ENCODE measurements at regions of chr2 and their contacts with region 1.

Region 1: GRCh38 chr2:113198790-113199612 is 25.2 kb downstream of the PSD4 start:
- DNase-seq: peak; percentile 78
- ATAC-seq: peak; percentile 78
- H3K4me3 Mint-ChIP-seq: no peak overlapping the region
- H3K27ac Mint-ChIP-seq: no peak overlapping the region
- H3K4me1 Mint-ChIP-seq: peaks cover 47% of the 10 kb centered on the region
- H3K27me3 Mint-ChIP-seq: no peaks in the 10 kb centered on the region

Region 2: GRCh38 chr2:113173542-113174395 is 25.2 kb before region 1 on chr2 and contains the start of gene PSD4:
- CTCF ChIA-PET with region 1: interaction called, 30 read pairs
- POLR2A ChIA-PET with region 1: interaction called, 17 read pairs
- DNase-seq: peak; percentile 96
- ATAC-seq: peak; percentile 75
- H3K4me3 Mint-ChIP-seq: peak within 1 kb of the TSS; percentile 83
- H3K27ac Mint-ChIP-seq: peak within 1 kb of the TSS; percentile 91
- H3K4me1 Mint-ChIP-seq: peaks cover 70% of the 10 kb centered on the region
- H3K27me3 Mint-ChIP-seq: peaks cover 2% of the 10 kb centered on the region
- total RNA-seq, gene PSD4: 394 to 404 TPM